Ovary (tissue), 10 donors: ENCODE measurements at regions of chr21 and their contacts with region 1.

Region 1: DNA sequence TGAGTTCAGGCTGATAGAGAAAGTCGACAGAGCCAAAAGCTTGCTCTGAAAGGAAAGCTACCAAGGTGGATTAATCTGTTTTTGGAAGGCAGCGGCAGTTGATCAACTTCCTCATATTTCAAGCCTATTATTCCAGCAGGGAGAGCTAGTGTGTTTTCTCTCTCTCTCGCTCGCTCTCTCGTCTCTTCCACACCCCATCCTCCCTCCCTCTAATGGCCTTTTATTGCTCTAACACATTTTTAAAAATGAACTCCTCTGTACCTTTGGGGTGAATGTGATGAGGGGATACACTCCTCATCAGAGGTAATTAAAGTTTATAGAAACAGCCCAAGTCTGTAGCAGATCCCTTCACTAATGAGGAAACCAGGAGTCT is 126.4 kb downstream of the CLIC6 start:
- DNase-seq: no peak
- H3K4me3 ChIP-seq: no peak overlapping the region
- H3K27ac ChIP-seq: no peak overlapping the region
- H3K4me1 ChIP-seq: peaks cover 2% of the 10 kb centered on the region
- H3K27me3 ChIP-seq: no peaks in the 10 kb centered on the region
- CTCF ChIP-seq: peak in 1 of 3 donors; percentile 11
- EP300 ChIP-seq: no peak
- POLR2A ChIP-seq: no peak

Region 2: DNA sequence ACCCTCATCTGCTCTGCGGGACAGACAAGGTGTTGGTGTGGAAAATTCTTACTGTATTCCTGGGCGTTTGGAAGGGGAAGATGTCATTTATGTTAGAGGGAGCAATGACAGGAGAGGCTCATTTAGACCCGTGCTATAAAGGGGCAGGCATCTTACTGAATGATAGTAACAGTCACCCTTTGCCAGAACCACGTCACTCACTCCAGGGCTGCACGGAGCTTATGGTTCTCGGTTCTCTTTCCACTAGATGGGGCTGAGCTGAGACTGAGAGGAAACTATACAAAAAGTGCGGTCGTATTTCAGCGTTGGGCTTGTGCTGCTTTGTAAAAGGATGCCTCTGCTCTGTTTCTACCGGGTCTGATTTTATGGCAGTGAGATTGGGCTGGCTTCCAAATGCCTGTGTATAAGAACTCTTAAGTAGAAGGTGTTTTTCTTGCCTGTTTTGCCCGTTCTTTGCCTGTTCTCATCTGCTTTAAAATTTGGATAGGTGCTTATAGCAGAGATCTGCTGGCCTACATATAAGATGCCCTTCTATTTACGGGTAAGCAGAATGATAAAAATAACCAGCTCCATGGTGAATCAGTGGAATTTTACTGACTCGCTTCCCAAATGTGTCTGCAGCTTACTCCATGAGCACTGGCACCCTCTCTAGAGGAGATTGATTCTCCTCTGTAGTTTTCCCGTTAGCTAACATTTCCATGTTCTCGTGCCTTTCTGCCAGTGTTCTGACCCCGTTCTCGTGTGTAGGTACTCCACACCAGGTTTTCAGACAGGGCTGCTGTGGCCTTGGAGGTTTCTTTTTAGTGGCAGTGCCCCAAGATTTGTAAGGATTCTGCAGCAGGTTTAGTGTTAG is 665.9 kb before region 1 on chr21:
- intact Hi-C with region 1: no loop called
- DNase-seq: peak; percentile 43 to 62 (median 52)
- H3K4me3 ChIP-seq: no peak overlapping the region
- H3K27ac ChIP-seq: peak overlapping the region; percentile 15 to 52
- H3K4me1 ChIP-seq: peaks cover 29% of the 10 kb centered on the region
- H3K27me3 ChIP-seq: no peaks in the 10 kb centered on the region
- CTCF ChIP-seq: no peak
- EP300 ChIP-seq: no peak
- POLR2A ChIP-seq: no peak

Region 3: DNA sequence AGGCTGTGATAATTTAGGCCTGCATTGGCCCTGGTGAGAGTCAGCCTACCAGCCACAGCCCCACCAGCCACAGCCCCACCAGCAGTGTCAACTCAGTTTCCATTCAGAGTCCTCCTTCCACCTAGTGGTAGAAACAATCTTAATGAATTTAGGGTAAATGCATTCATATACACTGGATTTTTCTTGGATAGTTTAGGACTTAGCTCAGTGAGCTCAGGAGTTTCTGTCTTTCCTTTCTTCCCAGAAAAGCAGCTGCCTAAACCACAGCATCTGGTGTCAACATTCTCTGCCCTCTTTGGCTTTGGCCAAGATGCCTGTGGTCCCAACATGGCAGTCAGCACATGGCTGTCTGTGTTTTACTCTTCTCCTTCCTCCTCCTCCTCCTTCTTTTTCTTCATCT is 32.4 kb before region 1 on chr21:
- intact Hi-C with region 1: no loop called
- DNase-seq: no peak
- H3K4me3 ChIP-seq: no peak overlapping the region
- H3K27ac ChIP-seq: no peak overlapping the region
- H3K4me1 ChIP-seq: no peaks in the 10 kb centered on the region
- H3K27me3 ChIP-seq: no peaks in the 10 kb centered on the region
- CTCF ChIP-seq: no peak
- EP300 ChIP-seq: no peak
- POLR2A ChIP-seq: no peak

Region 4: DNA sequence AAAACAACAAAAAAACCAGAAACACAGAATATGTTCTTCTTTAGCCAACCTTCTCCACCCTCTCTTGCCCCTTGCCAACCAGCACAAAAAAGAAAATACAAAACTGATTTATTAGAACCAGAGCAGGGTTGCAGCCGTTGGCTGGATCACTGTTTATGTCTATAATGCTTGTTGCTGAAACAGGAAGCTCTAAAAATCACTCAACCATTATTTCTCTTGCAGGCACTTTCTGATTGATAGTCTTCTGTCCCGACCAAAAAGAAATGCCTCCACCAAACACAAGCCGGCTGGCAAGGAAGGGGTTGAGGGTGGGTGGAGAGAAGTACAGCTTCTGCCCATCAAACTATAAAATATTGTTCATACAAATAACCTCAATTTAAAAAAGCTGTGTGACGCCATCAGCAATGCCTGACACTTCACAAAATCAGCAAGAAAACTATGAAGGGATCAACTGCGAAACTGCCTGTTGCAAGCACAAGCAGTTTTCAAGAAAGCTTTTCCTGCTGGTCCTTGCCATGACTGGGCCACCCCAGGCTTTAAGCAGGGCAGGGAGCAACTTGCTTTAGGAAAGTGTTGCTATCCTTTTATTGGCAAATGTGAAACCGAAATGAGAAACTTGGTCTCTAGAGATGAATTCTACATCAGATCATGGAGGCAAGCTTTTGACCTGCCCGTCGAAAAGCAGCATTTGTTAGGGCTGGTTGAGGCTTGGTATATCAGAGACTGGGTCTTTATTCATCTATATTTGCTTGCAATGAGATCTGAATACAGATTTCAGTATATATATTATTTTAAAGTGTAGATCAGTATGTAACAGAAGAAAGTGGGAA is 79.7 kb after region 1 on chr21:
- intact Hi-C with region 1: loop called in 1 of 4 experiments (anchors 5 kb)
- DNase-seq: no peak
- H3K4me3 ChIP-seq: no peak overlapping the region
- H3K27ac ChIP-seq: no peak overlapping the region
- H3K4me1 ChIP-seq: peaks cover 3% of the 10 kb centered on the region
- H3K27me3 ChIP-seq: peaks cover 5% of the 10 kb centered on the region
- CTCF ChIP-seq: no peak
- EP300 ChIP-seq: no peak
- POLR2A ChIP-seq: no peak

Region 5: GRCh38 chr21:34974162-34974981 is 179.2 kb after region 1 on chr21:
- intact Hi-C with region 1: no loop called
- DNase-seq: no peak
- H3K4me3 ChIP-seq: no peak overlapping the region
- H3K27ac ChIP-seq: no peak overlapping the region
- H3K4me1 ChIP-seq: no peaks in the 10 kb centered on the region
- H3K27me3 ChIP-seq: no peaks in the 10 kb centered on the region
- CTCF ChIP-seq: no peak
- EP300 ChIP-seq: no peak
- POLR2A ChIP-seq: no peak